B cell (primary cell): ENCODE measurements at regions of chr7 and their contacts with region 1.

Region 1: GRCh38 chr7:148563583-148564274 is 26.8 kb upstream of the C7orf33 start:
- DNase-seq: no peak
- ATAC-seq: no peak
- H3K4me3 ChIP-seq: peak overlapping the region in 1 of 5 experiments; percentile 20
- H3K4me3 Mint-ChIP-seq: peak overlapping the region; percentile 70
- H3K27ac ChIP-seq: no peak overlapping the region
- H3K27ac Mint-ChIP-seq: peak overlapping the region; percentile 5
- H3K4me1 ChIP-seq: peaks cover 8 to 13% of the 10 kb centered on the region in 2 donors
- H3K4me1 Mint-ChIP-seq: peaks cover 15% of the 10 kb centered on the region
- H3K27me3 ChIP-seq: no peaks in the 10 kb centered on the region
- H3K27me3 Mint-ChIP-seq: peaks cover 3% of the 10 kb centered on the region
- CTCF ChIP-seq: no peak

Region 2: GRCh38 chr7:148527707-148528168 is 36.0 kb before region 1 on chr7:
- CTCF ChIA-PET with region 1: no interaction called
- POLR2A ChIA-PET with region 1: no interaction called
- intact Hi-C with region 1: no loop called
- DNase-seq: peak; percentile 90
- ATAC-seq: peak; percentile 97
- H3K4me3 ChIP-seq: no peak overlapping the region
- H3K4me3 Mint-ChIP-seq: no peak overlapping the region
- H3K27ac ChIP-seq: no peak overlapping the region
- H3K27ac Mint-ChIP-seq: no peak overlapping the region
- H3K4me1 ChIP-seq: no peaks in the 10 kb centered on the region
- H3K4me1 Mint-ChIP-seq: peaks cover 14% of the 10 kb centered on the region
- H3K27me3 ChIP-seq: no peaks in the 10 kb centered on the region
- H3K27me3 Mint-ChIP-seq: no peaks in the 10 kb centered on the region
- CTCF ChIP-seq: peak; percentile 86

Region 3: DNA sequence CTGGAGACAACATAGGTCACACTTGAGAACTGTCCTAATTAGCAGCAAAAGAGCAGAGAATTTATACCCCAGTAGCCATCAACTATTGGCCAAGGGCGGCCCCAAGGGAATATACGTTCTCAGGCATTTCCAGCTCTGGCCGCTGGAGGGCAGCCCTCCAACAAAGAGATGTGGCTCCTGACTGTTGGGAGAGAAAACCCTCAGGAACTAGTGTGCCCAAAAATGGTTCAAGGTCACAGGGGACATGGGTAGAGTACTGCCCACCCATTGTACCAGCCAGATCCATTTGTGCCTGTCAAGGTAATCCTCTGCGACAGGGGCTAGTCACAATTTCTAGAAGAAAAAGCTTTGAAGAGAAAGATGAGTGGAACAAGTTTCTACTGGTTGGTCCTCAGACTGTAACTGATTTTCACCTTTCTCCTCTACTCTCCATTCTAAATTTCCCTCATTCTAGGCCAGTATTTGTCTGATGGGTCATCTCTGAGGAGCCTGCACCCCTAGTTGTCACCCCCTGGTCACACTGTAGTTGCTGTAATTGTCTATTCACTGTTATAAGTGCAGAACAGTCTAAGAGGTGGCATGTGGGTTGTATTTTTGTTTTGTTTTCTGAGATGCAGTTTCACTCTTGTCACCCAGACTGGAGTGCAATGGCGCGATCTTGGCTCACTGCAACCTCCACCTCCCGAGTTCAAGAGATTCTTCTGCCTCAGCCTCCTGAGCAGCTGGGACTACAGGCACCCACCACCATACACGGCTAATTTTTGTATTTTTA is 12.1 kb after region 1 on chr7:
- CTCF ChIA-PET with region 1: interaction called, 25 read pairs
- POLR2A ChIA-PET with region 1: no interaction called
- intact Hi-C with region 1: no loop called
- DNase-seq: peak; percentile 75
- ATAC-seq: peak; percentile 82
- H3K4me3 ChIP-seq: no peak overlapping the region
- H3K4me3 Mint-ChIP-seq: no peak overlapping the region
- H3K27ac ChIP-seq: no peak overlapping the region
- H3K27ac Mint-ChIP-seq: no peak overlapping the region
- H3K4me1 ChIP-seq: peaks cover 0 to 5% of the 10 kb centered on the region in 2 donors
- H3K4me1 Mint-ChIP-seq: no peaks in the 10 kb centered on the region
- H3K27me3 ChIP-seq: no peaks in the 10 kb centered on the region
- H3K27me3 Mint-ChIP-seq: no peaks in the 10 kb centered on the region
- CTCF ChIP-seq: peak; percentile 83